ENCODE measurements at regions of chr16 and their contacts with region 1.

Region 1: GRCh38 chr16:11554053-11554452 is 32.7 kb downstream of the LITAF start:
- DNase-seq: no peak
- ATAC-seq: no peak
- H3K4me3 Mint-ChIP-seq: no peak overlapping the region
- H3K27ac Mint-ChIP-seq: no peak overlapping the region
- H3K4me1 Mint-ChIP-seq: peaks cover 31% of the 10 kb centered on the region
- H3K27me3 Mint-ChIP-seq: no peaks in the 10 kb centered on the region

Region 2: DNA sequence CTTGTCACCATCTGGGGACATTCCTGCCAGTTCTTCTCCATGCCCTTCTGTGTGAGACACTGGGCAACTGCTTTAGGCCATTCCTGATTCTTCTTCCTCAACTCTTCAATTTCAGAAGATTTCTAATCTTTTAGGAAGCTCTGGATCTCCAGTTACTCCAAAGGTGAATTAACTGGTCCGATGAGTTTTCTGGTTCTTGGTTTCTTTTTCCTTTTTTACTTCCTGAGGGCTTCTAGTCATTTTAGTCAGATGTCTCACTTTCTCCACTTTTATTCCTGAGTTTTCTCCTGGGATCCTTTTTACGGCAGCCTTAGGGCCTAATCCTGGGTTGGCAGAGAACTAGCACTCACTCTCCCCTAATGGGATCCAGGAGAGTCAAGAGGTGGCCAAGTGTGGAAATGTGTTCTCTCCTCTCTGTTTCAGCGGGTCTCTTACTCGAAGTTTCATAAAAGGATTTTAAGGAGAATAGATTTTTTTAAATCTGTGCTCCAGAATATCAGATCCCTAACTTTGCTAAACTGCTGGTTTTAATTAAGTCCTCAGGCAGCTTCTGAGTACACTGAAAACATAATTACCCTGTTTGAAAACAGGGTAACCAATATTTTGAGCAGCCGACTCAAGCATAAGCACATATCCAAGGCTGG is 101.2 kb before region 1 on chr16:
- CTCF ChIA-PET with region 1: no interaction called
- POLR2A ChIA-PET with region 1: no interaction called
- DNase-seq: no peak
- ATAC-seq: no peak
- H3K4me3 Mint-ChIP-seq: no peak overlapping the region
- H3K27ac Mint-ChIP-seq: no peak overlapping the region
- H3K4me1 Mint-ChIP-seq: no peaks in the 10 kb centered on the region
- H3K27me3 Mint-ChIP-seq: peaks cover 4% of the 10 kb centered on the region

Region 3: DNA sequence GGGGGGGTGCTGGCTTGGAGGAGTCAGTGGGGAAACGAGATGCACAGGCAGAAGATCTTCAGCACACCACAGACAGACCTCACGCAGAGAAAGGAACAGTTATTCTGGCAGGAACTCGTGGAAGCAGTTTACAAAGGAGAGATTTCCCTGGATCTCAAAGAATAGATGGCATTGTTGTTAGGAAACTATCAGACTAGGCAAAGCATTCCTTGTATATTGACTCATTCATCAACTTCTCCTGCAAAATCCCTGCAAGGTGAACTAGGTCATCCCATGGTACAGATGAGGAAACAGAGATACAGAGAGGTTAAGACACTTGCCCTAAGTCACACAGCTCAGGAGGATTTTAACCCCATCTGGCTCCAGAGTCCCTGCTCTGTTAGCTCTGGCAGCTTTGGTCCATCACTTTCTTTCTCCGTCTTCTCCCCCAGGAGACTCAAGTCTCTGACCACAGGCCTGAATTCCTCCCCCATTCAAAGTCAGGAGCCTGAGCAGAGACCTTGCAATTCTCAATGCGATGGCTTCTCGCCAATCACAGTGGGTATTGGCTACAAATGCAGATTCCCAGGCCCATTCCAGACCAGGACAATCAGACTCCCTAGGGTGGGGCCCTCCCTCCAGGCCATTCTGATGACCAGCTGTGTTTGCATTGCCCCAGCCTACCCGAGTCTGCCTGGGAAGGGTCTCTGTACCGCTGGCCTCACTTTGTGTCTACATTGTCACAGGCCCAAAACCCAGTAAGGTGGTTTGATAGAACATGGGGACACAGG is 23.7 kb before region 1 on chr16:
- CTCF ChIA-PET with region 1: interaction called, 24 read pairs
- POLR2A ChIA-PET with region 1: no interaction called
- DNase-seq: no peak
- ATAC-seq: no peak
- H3K4me3 Mint-ChIP-seq: no peak overlapping the region
- H3K27ac Mint-ChIP-seq: no peak overlapping the region
- H3K4me1 Mint-ChIP-seq: peaks cover 1% of the 10 kb centered on the region
- H3K27me3 Mint-ChIP-seq: peaks cover 2% of the 10 kb centered on the region

Region 4: DNA sequence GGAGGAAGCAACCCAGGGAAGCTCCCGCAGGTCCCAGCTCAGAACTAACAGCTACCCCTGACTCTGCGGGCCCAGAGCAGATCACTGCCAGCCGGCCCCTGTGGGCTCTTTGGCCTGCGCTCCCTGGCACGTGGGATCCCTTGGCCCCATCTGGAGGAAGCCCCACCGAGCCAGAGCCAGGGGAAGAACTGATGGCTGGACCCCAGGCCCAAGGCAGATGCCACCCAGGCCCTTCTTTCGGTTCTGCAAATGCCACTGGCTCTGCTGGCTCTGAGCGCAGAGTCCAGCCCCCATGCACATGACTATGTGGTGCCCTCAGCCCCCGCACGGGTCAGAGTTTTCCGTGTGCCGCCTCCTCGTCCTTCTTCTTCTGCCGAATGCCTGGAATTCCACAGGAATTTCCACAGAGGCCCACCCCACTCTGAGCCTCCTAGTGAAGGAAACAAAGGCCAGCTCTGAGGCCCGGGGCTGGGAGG is 78.4 kb after region 1 on chr16:
- CTCF ChIA-PET with region 1: no interaction called
- POLR2A ChIA-PET with region 1: no interaction called
- DNase-seq: no peak
- ATAC-seq: no peak
- H3K4me3 Mint-ChIP-seq: no peak overlapping the region
- H3K27ac Mint-ChIP-seq: no peak overlapping the region
- H3K4me1 Mint-ChIP-seq: peaks cover 23% of the 10 kb centered on the region
- H3K27me3 Mint-ChIP-seq: peaks cover 2% of the 10 kb centered on the region

Measured in activated CD8-positive, alpha-beta T cell treated with anti-CD3 and anti-CD28 coated beads, Interleukin-2, amount 10 ng/mL, durations not matched to agents 7 days and 5 days (primary cell).